CD4-positive, alpha-beta T cell (primary cell): ENCODE measurements at regions of chr1 and their contacts with region 1.

Region 1: DNA sequence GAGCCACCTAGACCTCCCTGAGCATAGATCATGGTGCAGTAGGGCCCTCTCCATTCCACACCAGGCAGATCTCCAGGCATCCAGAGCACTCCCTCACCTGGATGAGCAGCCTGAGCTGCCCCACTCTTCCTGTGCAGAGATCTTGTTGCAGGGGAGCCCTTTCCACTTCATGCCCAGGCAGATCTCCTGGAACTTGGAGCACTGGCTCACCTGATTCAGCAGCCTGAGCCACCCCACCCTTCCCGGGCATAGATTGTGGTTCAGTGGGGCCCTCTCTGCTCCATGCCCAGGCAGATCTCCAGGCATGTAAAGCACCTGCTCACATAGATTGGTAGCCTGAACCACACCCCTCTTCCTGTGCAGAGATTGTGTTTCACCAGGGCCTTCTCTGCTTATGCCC is 78.0 kb downstream of the SEC16B start:
- DNase-seq: no peak
- ATAC-seq: no peak
- H3K4me3 ChIP-seq: no peak overlapping the region
- H3K4me3 Mint-ChIP-seq: no peak overlapping the region
- H3K27ac ChIP-seq: no peak overlapping the region
- H3K27ac Mint-ChIP-seq: no peak overlapping the region
- H3K4me1 ChIP-seq: no peaks in the 10 kb centered on the region
- H3K4me1 Mint-ChIP-seq: no peaks in the 10 kb centered on the region
- H3K27me3 ChIP-seq: no peaks in the 10 kb centered on the region
- H3K27me3 Mint-ChIP-seq: no peaks in the 10 kb centered on the region
- CTCF ChIP-seq: no peak

Region 2: DNA sequence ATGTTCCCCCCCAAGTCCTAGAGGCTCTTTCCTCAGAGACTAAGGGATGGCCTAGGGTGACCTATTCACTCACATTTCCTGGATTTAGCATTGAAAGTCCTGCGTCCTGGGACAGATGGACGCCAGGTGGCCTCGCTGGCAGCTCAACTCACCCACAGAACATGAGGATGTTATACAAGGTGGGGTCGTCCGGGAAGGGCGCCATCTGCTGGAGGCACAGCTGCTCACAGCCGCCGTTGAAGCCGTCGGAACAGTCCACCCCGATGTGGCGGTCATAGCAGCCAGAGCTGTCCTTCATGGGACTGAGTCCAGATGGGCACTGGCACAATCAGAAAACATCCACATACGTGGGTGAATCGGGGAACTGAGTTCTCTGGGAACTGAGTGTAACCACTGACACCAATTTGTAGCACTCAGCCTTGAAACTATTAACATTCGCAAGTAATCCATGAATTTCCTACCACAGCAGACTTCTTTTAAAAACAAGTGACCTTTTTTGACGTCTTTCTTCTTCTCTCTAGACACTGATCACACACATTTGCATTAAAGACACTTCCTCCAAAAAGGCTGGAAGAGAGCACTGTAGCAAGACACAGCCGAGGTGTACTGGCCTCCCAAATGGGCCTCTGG is 942.7 kb before region 1 on chr1:
- CTCF ChIA-PET with region 1: no interaction called
- POLR2A ChIA-PET with region 1: no interaction called
- intact Hi-C with region 1: loop called in 1 of 2 experiments (anchors 5 kb)
- DNase-seq: no peak
- ATAC-seq: no peak
- H3K4me3 ChIP-seq: no peak overlapping the region
- H3K4me3 Mint-ChIP-seq: no peak overlapping the region
- H3K27ac ChIP-seq: no peak overlapping the region
- H3K27ac Mint-ChIP-seq: no peak overlapping the region
- H3K4me1 ChIP-seq: no peaks in the 10 kb centered on the region
- H3K4me1 Mint-ChIP-seq: no peaks in the 10 kb centered on the region
- H3K27me3 ChIP-seq: peaks cover 0 to 3% of the 10 kb centered on the region in 2 experiments
- H3K27me3 Mint-ChIP-seq: peaks cover 7% of the 10 kb centered on the region
- CTCF ChIP-seq: no peak